Activated T-helper 2 cell treated with anti-CD3 and anti-CD28 coated beads, Interferon-gamma antibody, Interleukin-2, Interleukin-4, amounts not matched to agents 10 μg/mL and 5 μg/mL and 100 μg/mL, durations not matched to agents 14 hours and 24 hours and 36 hours (primary cell): ENCODE measurements at regions of chr12 and their contacts with region 1.

Region 1: DNA sequence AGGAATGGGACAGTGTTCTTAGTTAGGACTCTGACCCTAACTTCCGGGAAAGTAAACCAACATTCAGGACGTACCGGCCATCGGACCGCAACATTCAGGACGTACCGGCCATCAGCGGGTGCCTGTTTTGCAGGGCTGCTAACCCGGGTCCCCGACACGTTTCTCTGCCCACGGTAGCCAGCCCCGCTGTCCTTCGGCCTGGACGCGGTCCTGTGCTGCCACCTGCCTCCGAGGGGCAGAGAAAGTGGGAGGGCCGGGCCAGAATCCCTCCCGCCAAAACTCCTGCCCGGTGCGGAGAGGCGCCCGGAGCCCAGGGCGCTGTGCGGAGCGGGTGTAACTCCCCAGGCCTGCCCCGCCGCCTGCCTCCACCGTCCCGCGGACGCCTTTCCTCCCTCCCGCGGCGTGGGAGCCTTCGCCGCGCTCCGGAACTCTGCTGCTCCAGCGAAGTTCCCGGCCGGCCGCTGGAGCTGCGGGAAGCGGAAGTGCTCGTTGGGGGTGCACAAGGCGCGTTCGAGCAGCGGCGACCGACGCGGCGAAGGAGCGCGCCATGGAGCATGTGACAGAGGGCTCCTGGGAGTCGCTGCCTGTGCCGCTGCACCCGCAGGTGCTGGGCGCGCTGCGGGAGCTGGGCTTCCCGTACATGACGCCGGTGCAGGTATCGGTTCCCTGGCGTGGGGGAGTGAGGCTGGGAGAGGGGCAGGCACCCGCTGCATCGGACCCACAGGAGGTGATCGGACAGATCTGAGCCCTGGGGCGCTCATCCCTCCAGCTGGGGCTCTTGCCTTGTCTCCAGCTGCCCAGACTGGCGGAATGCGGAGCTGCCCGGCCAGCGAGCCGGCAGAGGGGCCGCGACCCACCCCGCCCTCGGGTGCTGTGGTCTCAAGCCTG is at the start of gene DDX55:
- DNase-seq: peak; percentile 83
- H3K4me3 Mint-ChIP-seq: peak within 1 kb of the TSS; percentile 96
- H3K27ac Mint-ChIP-seq: peak within 1 kb of the TSS; percentile 95
- H3K4me1 Mint-ChIP-seq: peaks cover 18% of the 10 kb centered on the region
- H3K27me3 Mint-ChIP-seq: no peaks in the 10 kb centered on the region
- total RNA-seq, gene DDX55: 60.0 and 63.2 TPM in 2 replicates

Region 2: DNA sequence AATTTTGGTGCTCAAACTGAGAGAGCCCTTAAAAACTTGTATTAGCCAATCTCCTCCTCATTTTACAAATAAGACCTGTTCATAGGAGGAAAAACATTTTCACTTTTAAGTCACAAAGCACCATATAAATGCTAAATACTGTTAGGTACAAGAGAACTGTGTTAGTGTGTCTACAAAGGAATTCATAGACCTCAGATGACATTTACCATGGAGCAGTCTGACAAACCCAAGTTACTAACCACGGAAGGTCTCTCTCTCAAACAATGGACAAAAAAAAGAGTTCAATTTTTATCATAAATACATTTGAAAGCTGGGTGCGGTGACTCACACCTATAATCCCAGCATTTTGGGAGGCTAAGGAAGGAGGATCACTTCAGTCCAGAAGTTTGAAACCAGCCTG is 247.2 kb before region 1 on chr12:
- intact Hi-C with region 1: no loop called
- DNase-seq: no peak
- H3K4me3 Mint-ChIP-seq: no peak overlapping the region
- H3K27ac Mint-ChIP-seq: peak overlapping the region; percentile 39
- H3K4me1 Mint-ChIP-seq: peaks cover 45% of the 10 kb centered on the region
- H3K27me3 Mint-ChIP-seq: no peaks in the 10 kb centered on the region

Region 3: DNA sequence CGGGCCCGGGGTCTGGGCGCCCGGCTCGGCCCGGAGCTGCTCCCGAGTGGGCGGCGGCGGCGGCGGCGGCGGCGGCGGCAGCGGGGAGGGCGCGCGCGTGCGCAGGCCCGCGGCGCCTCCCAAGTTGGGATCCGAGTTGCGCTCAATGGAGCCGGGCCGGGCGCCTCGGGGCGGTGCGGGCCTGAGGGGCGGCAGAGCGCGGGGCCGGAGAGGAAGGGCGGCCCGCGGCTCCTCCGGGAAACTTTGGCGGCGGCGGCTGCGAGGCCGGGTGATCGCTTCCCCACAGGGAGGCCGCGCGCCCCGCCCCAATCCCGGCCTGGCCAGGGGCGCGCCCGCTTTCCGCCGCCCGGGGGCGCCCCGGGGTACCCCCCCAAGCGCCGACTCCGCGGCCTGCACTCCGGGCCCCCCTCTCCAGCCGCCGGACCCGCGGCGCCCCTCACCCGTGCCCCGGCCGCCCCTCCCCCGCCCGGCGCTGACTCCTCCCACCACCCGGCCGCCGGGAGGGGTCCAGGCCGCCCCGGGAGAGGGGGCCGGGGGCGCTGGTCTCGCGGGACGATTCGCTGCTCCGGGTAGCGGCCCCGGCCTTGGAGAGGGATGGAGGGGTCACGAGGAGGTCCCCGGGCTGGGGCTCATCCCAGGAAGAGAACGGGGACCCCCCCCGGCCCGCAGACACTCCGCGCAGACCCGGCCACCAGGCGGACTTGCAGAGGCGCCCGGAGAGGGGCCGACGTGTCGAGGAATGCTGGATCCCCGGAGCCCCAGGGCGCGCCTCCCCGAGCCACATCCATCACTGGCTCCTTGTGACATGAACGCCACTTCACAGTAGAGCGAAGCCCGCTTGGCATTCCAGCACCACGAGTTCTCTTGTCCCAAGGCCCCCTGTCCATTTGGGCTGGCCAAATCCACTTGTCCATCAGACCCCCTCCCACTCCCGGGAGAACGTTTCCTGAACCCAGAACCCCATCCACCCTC is 67.9 kb before region 1 on chr12 and contains the start of gene RILPL1:
- intact Hi-C with region 1: no loop called
- DNase-seq: peak; percentile 22
- H3K4me3 Mint-ChIP-seq: peak within 1 kb of the TSS; percentile 84
- H3K27ac Mint-ChIP-seq: peak within 1 kb of the TSS; percentile 64
- H3K4me1 Mint-ChIP-seq: peaks cover 11% of the 10 kb centered on the region
- H3K27me3 Mint-ChIP-seq: peaks cover 12% of the 10 kb centered on the region
- total RNA-seq, gene RILPL1: 5.9 and 6.0 TPM in 2 replicates

Region 4: DNA sequence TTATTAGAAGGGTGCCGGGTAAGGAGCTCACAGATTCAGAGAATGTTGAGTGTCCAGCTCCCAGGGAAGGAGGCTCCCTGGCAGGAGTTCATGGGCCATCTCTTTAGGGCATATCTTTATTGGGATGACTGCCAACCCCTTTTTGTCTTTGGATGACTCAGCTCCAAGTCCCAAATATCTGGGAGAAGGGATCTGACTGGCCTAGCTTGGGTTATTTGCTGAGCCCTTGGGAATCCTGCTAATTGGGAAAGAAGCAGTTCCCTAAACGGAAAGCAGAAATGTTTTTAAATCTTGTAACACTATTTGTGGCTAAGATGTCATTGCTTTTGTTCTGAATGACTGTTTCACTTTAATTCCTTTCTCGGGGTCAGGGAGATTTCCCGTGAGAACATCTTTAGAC is 12.7 kb after region 1 on chr12:
- intact Hi-C with region 1: loop called (anchors 2 kb)
- DNase-seq: no peak
- H3K4me3 Mint-ChIP-seq: no peak overlapping the region
- H3K27ac Mint-ChIP-seq: peak overlapping the region; percentile 22
- H3K4me1 Mint-ChIP-seq: peaks cover 2% of the 10 kb centered on the region
- H3K27me3 Mint-ChIP-seq: no peaks in the 10 kb centered on the region

Region 5: GRCh38 chr12:123633379-123634141 is 31.7 kb after region 1 on chr12 and contains the starts of genes EIF2B1 and GTF2H3:
- intact Hi-C with region 1: loop called (anchors 1 kb)
- DNase-seq: peak; percentile 96
- H3K4me3 Mint-ChIP-seq: peak within 1 kb of the TSS; percentile 95
- H3K27ac Mint-ChIP-seq: peak within 1 kb of the TSS; percentile 95
- H3K4me1 Mint-ChIP-seq: peaks cover 16% of the 10 kb centered on the region
- H3K27me3 Mint-ChIP-seq: no peaks in the 10 kb centered on the region
- total RNA-seq, gene EIF2B1: 65.8 and 66.0 TPM in 2 replicates
- total RNA-seq, gene GTF2H3: 53.2 and 65.4 TPM in 2 replicates

Region 6: GRCh38 chr12:125399489-125399888 is 1797.6 kb after region 1 on chr12:
- intact Hi-C with region 1: no loop called
- DNase-seq: no peak
- H3K4me3 Mint-ChIP-seq: no peak overlapping the region
- H3K27ac Mint-ChIP-seq: no peak overlapping the region
- H3K4me1 Mint-ChIP-seq: peaks cover 8% of the 10 kb centered on the region
- H3K27me3 Mint-ChIP-seq: peaks cover 2% of the 10 kb centered on the region